Activated naive CD4-positive, alpha-beta T cell treated with anti-CD3 and anti-CD28 coated beads for 36 hours (primary cell): ENCODE measurements at regions of chr11 and their contacts with region 1.

Region 1: GRCh38 chr11:57530596-57531507 is at the start of gene TIMM10:
- DNase-seq: peak; percentile 97
- H3K4me3 Mint-ChIP-seq: peak within 1 kb of the TSS; percentile 90
- H3K27ac Mint-ChIP-seq: peak within 1 kb of the TSS; percentile 87
- H3K4me1 Mint-ChIP-seq: peaks cover 38% of the 10 kb centered on the region
- H3K27me3 Mint-ChIP-seq: no peaks in the 10 kb centered on the region
- total RNA-seq, gene TIMM10: 131 to 136 TPM

Region 2: DNA sequence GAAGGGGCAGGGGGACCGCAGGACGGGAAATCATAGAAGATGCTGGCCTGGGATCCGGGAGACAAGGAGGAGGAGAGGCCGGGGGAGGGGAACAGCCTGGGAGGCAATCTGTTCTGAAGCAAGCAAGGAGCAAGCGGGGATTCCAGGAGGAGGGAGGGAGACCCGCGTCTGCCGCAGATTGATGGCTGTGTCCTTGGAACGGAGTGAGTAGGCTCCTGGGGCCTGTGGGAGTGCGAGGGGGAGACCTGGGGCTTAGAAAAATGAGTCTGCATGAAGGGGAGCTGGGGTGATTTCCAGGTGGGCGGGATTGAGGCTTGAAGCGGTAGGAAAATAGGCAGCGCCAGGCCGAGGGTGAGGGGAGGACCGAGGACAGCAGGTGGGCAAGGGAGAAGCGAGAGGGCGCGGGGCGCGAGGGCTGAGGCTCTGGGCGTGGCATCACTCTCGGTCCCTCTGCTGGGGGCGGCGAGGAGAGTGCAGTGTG is 350.7 kb before region 1 on chr11:
- CTCF ChIA-PET with region 1: no interaction called
- intact Hi-C with region 1: no loop called
- DNase-seq: no peak
- H3K4me3 Mint-ChIP-seq: no peak overlapping the region
- H3K27ac Mint-ChIP-seq: no peak overlapping the region
- H3K4me1 Mint-ChIP-seq: no peaks in the 10 kb centered on the region
- H3K27me3 Mint-ChIP-seq: peaks cover 45% of the 10 kb centered on the region

Region 3: DNA sequence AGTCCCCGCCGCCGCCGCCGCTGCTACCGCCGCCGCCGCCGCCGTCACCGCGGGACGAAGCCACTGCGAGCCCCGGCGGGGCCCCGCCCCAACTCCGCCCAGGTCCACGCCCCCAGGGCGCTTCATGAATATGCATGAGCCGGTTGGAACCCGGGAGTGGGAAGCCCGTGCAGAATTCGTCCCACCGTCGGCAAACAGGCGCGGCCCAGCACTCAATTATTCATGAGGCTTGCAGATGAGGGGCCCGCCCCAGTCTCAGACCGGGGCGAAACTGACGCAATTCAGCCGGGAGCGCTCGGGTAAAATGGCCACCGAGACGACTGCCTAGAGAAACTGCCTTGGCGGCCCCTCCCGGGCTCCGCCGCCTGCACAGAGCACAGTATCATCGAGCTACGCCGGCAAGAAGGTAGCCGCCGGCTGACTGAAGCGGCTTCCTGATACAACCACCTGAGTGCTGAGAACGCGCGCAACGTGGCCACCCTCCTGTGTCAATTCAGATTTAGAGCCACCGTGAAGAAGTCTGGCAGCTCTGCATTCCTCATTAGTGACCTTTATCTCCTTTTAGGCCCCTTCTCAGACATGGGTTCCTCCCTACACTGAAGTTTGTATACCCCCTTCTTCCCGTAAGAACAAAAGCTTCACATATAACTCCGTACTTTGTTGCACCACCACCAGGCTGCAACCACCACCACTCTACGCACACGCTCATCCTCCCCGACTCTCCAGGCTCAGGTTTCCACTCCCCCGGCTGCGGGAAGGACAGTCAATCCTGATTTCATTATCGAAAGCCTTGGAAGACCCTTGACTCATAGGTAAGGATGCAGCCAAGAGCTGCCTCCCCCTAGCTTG is 205.7 kb before region 1 on chr11 and contains the start of gene TNKS1BP1:
- CTCF ChIA-PET with region 1: no interaction called
- intact Hi-C with region 1: loop called (anchors 1 kb)
- DNase-seq: peak; percentile 95
- H3K4me3 Mint-ChIP-seq: peak within 1 kb of the TSS; percentile 82
- H3K27ac Mint-ChIP-seq: peak within 1 kb of the TSS; percentile 94
- H3K4me1 Mint-ChIP-seq: peaks cover 56% of the 10 kb centered on the region
- H3K27me3 Mint-ChIP-seq: no peaks in the 10 kb centered on the region
- total RNA-seq, gene TNKS1BP1: 14.1 to 14.7 TPM

Region 4: GRCh38 chr11:57426929-57427726 is 103.7 kb before region 1 on chr11 and contains the start of gene SLC43A3:
- CTCF ChIA-PET with region 1: interaction called, 4 read pairs
- intact Hi-C with region 1: loop called (anchors 1 kb)
- DNase-seq: peak; percentile 84
- H3K4me3 Mint-ChIP-seq: peak within 1 kb of the TSS; percentile 95
- H3K27ac Mint-ChIP-seq: peak within 1 kb of the TSS; percentile 96
- H3K4me1 Mint-ChIP-seq: peaks cover 33% of the 10 kb centered on the region
- H3K27me3 Mint-ChIP-seq: no peaks in the 10 kb centered on the region
- total RNA-seq, gene SLC43A3: 116 to 117 TPM

Region 5: DNA sequence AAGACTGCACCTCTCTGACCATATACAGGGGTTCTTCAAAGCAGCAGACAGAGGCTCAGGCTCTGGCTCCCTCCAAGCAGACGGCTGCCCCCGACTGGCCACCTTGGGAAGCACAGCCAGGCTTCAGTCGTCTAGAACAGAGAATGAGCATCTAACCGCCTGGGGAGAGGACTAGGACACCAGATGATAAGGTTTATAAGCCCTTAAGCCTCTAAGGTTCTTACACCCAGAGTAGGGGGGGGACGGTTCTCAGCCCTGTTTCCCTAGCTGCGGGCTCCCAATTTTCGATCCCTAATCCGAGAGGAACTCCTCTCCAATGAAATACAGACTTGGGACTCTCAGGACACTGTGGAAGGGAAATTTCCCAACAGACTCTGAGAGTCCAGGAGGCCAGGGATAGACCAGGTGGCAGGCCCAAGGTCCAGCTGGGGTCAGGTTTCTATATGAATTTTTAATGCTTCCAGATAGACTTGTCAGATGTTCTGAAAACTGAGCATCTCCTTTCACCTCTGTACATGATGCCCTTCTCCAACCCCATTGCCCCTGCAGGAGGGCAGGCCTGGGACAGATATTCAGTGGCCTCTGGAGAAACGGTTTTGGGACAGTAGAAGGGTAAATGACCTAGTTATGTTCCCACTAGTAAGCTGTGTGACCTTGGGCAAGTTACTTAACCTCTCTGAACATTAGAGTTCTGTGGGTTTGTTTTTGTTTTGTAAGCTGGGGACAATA is 50.3 kb before region 1 on chr11:
- CTCF ChIA-PET with region 1: interaction called, 29 read pairs
- intact Hi-C with region 1: loop called (anchors 5 kb)
- DNase-seq: peak; percentile 87
- H3K4me3 Mint-ChIP-seq: no peak overlapping the region
- H3K27ac Mint-ChIP-seq: no peak overlapping the region
- H3K4me1 Mint-ChIP-seq: peaks cover 22% of the 10 kb centered on the region
- H3K27me3 Mint-ChIP-seq: peaks cover 16% of the 10 kb centered on the region

Region 6: DNA sequence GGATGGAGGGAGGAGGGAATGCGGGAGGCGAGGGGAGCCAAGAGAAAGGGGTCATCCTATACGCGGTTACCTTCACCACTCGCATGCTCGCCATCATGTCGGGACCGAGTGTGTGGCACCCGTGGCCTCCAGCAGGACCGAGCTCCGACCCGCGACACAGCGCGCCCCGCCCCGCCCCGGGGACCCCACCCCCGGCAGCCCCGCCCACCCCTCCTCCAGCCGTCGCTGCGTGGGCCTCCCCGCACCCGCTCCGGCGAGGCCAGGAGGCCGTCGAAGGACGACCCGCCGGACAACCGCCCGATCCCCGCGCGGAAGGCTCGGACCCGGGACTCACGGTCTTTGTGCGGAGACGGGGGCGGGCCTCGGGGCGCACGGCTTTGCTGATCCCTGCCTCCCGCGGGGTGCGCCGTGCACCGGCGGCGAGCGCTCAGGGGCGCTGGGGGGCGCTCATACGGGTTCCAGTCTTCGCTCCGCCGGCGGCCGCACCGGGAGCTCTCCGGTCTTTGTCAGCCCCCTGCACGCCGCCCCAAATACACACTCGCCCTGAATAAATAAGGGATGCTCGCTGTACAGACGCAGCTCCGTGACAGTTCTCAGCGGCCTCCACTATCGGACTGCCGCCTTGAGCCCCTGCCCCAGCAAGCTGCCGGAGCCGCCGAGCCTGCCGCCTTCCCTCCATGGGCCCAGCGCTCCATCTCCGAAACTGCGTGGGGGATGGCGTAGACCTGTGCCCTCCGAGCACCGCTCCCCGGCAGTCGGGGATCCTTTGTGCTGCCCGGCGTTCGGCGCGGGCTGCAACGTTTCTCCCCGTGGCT is 36.9 kb after region 1 on chr11 and contains the start of gene UBE2L6:
- CTCF ChIA-PET with region 1: interaction called, 4 read pairs
- intact Hi-C with region 1: loop called (anchors 1 kb)
- DNase-seq: peak; percentile 66
- H3K4me3 Mint-ChIP-seq: peak within 1 kb of the TSS; percentile 97
- H3K27ac Mint-ChIP-seq: peak within 1 kb of the TSS; percentile 96
- H3K4me1 Mint-ChIP-seq: peaks cover 39% of the 10 kb centered on the region
- H3K27me3 Mint-ChIP-seq: no peaks in the 10 kb centered on the region
- total RNA-seq, gene UBE2L6: 187 to 194 TPM

Region 7: GRCh38 chr11:57667736-57668435 is 137.0 kb after region 1 on chr11 and contains the start of gene ZDHHC5:
- CTCF ChIA-PET with region 1: no interaction called
- intact Hi-C with region 1: loop called (anchors 1 kb)
- DNase-seq: peak; percentile 99
- H3K4me3 Mint-ChIP-seq: peak within 1 kb of the TSS; percentile 91
- H3K27ac Mint-ChIP-seq: peak within 1 kb of the TSS; percentile 97
- H3K4me1 Mint-ChIP-seq: peaks cover 43% of the 10 kb centered on the region
- H3K27me3 Mint-ChIP-seq: no peaks in the 10 kb centered on the region
- total RNA-seq, gene ZDHHC5: 38.5 to 46.6 TPM

Region 8: DNA sequence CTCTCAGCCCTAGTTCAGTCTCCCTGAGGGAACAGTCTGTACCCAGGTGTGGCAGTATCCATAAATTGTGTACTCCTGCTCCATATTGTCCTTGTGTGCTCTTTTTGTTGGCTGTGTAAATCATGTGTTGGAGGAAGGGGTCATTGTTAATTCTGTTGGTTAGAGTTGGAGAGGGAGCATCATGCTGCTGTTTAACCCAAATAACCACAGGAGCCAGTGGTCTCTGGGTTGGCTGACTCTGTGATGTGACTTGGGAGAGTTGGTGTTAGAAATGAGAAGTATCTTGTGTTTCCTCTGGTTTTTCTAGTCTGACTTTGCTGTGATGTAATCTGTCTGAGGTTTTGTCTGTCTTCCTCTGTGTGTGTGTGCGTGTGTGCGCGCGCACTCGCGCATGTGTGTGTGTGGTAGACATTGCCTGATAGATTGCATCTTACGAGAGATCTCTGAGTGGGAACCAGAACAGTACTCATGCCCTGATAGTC is 261.2 kb after region 1 on chr11:
- CTCF ChIA-PET with region 1: no interaction called
- intact Hi-C with region 1: loop called (anchors 2 kb)
- DNase-seq: peak; percentile 87
- H3K4me3 Mint-ChIP-seq: peak overlapping the region; percentile 59
- H3K27ac Mint-ChIP-seq: peak overlapping the region; percentile 94
- H3K4me1 Mint-ChIP-seq: peaks cover 34% of the 10 kb centered on the region
- H3K27me3 Mint-ChIP-seq: no peaks in the 10 kb centered on the region